ENCODE measurements at regions of chr15 and their contacts with region 1.

Region 1: GRCh38 chr15:44711356-44712107 is at the start of gene B2M:
- DNase-seq: peak; percentile 94
- CTCF ChIP-seq: no peak

Region 2: DNA sequence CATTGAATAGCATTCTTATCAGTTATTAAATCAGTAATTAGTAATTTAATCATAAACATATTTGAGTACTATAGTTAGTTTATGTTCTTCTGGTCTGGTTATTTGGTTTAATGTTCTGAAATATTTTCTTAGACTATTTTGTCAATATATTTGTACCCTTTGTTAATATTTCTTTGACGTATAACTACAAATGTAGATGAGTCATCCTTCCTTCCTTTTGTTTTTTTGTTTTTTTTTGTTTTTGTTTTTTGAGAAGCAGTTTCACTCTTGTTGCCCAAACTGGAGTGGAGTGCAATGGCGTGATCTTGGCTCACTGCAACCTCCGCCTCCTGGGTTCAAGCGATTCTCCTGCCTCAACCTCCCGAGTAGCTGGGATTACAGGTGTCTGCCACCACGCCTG is 192.0 kb before region 1 on chr15:
- CTCF ChIA-PET with region 1: no interaction called
- POLR2A ChIA-PET with region 1: no interaction called
- DNase-seq: no peak
- CTCF ChIP-seq: no peak

Region 3: GRCh38 chr15:44682211-44682610 is 29.3 kb before region 1 on chr15:
- CTCF ChIA-PET with region 1: interaction called, 8 read pairs
- POLR2A ChIA-PET with region 1: interaction called, 10 read pairs
- DNase-seq: peak; percentile 5
- CTCF ChIP-seq: no peak

Region 4: GRCh38 chr15:44728576-44729407 is 17.3 kb after region 1 on chr15:
- CTCF ChIA-PET with region 1: interaction called, 16 read pairs
- POLR2A ChIA-PET with region 1: interaction called, 112 read pairs
- DNase-seq: peak; percentile 89
- CTCF ChIP-seq: no peak